ENCODE measurements at regions of chr3 and their contacts with region 1.

Region 1: DNA sequence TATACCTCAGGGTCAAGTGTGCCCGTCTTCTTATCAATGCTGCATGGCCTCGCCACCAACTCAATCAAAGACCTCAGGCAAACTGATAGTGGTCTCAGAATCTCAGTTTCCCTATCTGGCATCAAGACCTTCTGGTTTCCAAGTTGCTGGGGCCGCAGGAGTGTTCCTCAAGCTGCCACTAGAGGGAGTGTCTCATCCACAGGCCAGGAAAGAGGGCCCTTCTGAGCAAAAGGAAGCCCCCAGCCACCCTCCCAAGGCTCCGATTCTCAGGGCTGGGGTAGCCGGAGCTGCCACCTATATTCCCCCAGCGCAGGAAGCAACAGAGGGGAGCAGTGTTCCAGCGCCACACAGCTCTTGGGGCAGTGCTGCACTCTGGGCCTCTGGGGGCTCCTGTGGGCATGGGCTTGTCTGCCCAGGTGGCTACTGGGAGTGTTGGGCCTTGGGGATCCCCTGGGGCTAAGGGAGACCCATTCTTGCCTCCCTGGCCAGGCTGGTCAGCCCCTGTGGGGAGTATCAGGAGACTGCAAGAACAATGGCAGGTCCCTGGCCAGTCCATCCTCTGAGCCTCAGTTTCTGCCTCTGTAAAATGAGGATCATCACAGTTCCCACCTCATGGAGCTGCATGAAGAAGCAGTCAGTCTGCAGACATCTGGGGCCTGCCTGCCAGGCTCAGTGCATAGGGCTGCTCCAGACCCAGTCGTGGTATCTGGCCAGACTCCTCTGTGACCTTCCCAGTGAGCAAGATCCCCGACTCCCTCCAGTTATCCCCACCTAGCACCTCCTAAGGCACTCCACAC is 23.4 kb upstream of the SEC13 start:
- DNase-seq: no peak
- H3K4me3 ChIP-seq: no peak overlapping the region
- H3K27me3 ChIP-seq: peaks cover 3% of the 10 kb centered on the region; the same call in 1 of the 2 replicates
- CTCF ChIP-seq: peak; percentile 96

Region 2: GRCh38 chr3:10357592-10358308 is 13.4 kb after region 1 on chr3:
- CTCF ChIA-PET with region 1: interaction called, 36 read pairs
- POLR2A ChIA-PET with region 1: no interaction called
- DNase-seq: peak; percentile 49
- H3K4me3 ChIP-seq: no peak overlapping the region
- H3K27me3 ChIP-seq: peaks cover 2% of the 10 kb centered on the region; the same call in 1 of the 2 replicates
- CTCF ChIP-seq: no peak

Region 3: GRCh38 chr3:10366651-10367101 is 22.3 kb after region 1 on chr3:
- CTCF ChIA-PET with region 1: interaction called, 14 read pairs
- POLR2A ChIA-PET with region 1: no interaction called
- DNase-seq: peak; percentile 93
- H3K4me3 ChIP-seq: no peak overlapping the region
- H3K27me3 ChIP-seq: peaks cover 2% of the 10 kb centered on the region; the same call in 1 of the 2 replicates
- CTCF ChIP-seq: no peak